Breast epithelium (tissue), 4 donors: ENCODE measurements at regions of chr12 and their contacts with region 1.

Region 1: DNA sequence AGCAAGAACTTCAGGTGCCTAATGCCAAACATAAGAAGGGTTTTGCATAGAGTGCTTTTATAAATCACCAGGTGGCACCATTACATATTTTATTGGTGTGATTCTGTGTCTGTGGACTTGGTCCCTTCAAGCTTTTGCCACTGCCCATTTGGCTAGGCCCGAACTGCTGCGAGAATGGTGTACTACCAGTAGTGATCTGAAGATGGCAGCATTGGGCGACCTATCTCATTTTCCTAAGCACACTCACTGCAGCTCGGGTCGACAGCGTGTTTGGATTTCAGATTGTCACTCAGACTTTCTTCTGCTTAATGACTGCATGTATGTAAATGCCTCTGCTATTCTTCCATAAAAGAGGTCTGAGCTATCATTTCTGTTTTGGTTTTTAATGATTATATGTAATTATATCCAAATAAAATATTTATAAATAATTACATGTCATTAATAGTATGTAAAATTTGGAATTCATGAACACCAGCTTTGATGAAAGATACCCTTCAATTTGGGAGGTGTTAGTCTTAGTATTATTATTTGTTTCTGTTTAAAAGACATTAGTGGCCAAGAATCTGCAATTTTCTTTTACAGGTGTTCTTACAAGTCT is 78.5 kb downstream of the TPH2 start:
- DNase-seq: peak; percentile 33 to 61
- H3K4me3 ChIP-seq: no peak overlapping the region
- H3K27ac ChIP-seq: no peak overlapping the region
- H3K4me1 ChIP-seq: no peaks in the 10 kb centered on the region
- H3K27me3 ChIP-seq: no peaks in the 10 kb centered on the region
- CTCF ChIP-seq: peak in 2 of 3 donors; percentile 64 to 65
- POLR2A ChIP-seq: no peak

Region 2: GRCh38 chr12:71981149-71981548 is 36.0 kb before region 1 on chr12:
- intact Hi-C with region 1: no loop called
- DNase-seq: no peak
- H3K4me3 ChIP-seq: no peak overlapping the region
- H3K27ac ChIP-seq: no peak overlapping the region
- H3K4me1 ChIP-seq: no peaks in the 10 kb centered on the region
- H3K27me3 ChIP-seq: no peaks in the 10 kb centered on the region
- CTCF ChIP-seq: no peak
- POLR2A ChIP-seq: no peak

Region 3: DNA sequence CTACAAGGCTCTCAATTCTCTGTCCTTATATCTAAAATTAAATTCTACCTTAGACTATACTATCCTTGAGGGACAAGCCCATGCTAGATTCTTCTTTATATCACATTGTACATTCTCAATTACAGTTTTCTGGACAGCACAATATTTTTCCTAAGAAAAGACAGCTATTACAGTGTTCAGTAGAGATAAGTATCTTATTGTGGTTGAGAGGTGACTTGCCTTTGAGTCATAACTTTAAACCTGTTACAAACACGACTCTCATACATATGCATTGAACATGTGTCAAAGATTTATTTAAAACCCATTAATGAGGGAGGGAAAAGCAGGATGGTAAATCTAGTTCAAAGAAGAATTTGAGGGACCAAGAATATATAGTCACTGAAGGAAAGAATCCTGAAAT is 17.4 kb before region 1 on chr12:
- intact Hi-C with region 1: loop called (anchors 1 kb)
- DNase-seq: no peak
- H3K4me3 ChIP-seq: no peak overlapping the region
- H3K27ac ChIP-seq: no peak overlapping the region
- H3K4me1 ChIP-seq: no peaks in the 10 kb centered on the region
- H3K27me3 ChIP-seq: no peaks in the 10 kb centered on the region
- CTCF ChIP-seq: no peak
- POLR2A ChIP-seq: no peak